AG04449 (cell line): ENCODE measurements at regions of chr11 and their contacts with region 1.

Region 1: DNA sequence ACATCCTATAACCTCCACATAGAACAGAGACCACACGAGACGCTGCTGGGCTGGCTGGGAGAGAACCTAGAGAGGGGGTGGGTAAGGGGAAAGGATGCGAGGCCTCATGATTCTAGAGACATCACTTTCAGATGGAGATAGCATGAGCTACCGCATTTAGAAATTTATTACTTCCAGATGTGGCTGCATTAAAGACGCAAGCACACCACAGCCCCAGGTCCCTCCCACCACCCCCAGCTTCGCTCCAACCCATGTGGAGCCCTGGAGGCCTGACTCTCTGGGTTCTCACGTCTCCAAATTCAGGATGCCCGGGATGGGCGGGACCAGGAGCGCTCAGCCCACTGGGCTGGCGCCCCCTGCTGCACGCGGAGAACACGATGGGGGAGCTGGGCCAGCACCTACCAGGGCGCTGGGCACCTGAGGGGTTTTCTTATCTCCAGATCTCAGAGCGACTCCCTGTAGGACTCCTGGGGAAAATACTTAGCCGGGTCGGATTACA is 13.6 kb downstream of the MRPL21 start:
- DNase-seq: peak; percentile 94
- H3K4me3 ChIP-seq: no peak overlapping the region
- CTCF ChIP-seq: peak; percentile 88

Region 2: DNA sequence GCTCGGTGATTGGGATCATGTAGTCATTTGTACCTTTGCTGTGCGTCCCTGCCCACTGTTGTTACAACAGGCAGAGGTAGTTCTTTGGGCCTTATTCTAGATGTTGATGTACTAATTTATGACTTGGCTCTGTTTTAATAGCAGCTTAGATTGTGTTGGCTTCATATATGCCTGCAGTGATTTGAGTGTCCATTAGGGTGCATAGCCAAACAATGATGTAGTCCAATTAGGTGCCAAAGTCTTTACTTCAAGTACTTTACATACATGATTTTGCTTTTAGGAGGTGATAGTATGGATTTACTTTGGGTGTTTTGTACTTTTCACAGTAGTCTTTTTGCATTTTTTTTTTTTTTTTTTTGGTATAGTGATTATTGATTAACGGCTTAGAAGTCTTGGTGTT is 383.1 kb before region 1 on chr11:
- CTCF ChIA-PET with region 1: no interaction called
- POLR2A ChIA-PET with region 1: no interaction called
- DNase-seq: no peak
- H3K4me3 ChIP-seq: no peak overlapping the region
- CTCF ChIP-seq: no peak

Region 3: DNA sequence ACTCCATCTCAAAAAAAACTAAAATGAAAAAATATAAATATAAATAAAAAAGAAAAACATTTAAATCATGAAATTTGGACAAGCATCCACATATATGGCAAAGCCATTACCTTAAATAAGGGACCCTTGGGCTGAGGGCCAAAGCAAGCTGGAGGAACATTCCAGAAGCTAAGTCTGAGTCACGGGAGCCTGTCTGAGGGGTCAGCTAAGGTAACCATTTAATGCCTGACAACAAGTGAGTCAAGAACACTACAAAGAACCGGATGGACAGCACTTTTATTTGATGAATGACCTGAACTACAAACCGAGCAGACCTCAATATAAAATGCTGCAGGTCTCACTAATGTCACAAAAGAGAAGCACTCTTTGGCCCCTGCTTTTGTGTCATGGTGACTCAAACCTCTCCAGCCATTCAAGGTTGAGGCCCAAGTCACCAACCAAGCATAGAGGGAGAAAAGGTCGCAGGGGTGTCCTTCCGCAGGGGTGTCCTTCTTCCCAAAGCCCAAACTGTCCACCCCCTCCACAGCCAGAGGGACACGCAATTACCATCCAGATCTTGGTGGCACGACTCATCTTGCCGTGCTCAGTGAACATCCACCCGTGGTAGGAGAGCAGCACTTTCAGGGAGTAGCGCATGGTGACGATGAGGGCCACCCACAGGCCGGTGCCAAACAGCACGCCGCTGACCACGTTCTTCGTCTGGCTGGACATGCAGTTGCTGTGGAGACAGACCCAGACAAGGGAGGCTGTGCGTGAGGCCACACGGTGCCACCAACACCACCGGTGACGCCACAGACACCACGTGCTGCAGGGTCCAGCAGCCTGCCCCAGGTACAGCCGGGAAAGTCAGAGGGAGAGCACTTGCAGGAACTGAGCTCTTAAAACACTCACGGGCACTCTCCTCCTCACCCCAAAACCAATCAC is 82.8 kb before region 1 on chr11:
- CTCF ChIA-PET with region 1: interaction called, 19 read pairs
- POLR2A ChIA-PET with region 1: no interaction called
- DNase-seq: peak; percentile 45
- H3K4me3 ChIP-seq: no peak overlapping the region
- CTCF ChIP-seq: no peak

Region 4: DNA sequence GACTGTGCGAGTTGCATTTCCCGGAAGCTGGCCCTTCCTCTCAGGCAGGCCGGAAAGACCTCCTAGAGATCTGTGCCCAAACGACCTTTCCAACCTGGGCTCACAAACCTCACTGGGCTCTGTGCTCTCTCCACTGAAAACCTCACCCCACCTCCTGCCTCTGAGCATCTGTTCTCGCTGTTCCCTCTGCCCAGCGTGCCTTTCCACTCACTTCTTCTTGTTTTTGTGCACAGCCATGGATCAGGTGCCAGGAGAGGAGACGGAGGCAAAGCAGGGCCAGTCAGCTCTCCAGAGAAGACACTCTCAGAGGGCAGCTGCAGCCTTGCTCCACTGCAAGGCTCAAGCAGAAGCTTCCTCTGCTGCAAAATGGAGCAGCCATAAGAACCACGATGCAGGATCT is 37.4 kb before region 1 on chr11:
- CTCF ChIA-PET with region 1: interaction called, 12 read pairs
- POLR2A ChIA-PET with region 1: no interaction called
- DNase-seq: no peak
- H3K4me3 ChIP-seq: no peak overlapping the region
- CTCF ChIP-seq: no peak

Region 5: DNA sequence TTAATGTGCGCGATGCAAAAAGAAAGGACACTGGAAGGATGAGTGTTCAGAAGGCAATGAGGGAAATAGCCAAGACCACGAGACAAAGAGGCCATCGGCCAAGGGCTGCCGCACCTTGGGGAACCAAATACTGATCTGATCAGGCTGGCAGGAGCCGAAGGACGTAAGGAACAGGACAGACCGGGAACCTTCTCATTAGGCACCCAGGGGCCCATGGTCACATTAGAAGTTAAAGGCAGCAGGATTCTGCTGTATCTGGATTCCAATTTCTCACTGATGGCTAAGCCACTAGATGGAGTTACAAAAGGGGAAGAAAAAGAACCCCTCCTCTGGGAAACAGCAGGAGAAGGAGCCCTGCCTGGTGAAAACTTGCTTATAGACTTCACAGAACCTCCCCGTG is 19.5 kb before region 1 on chr11:
- CTCF ChIA-PET with region 1: interaction called, 29 read pairs
- POLR2A ChIA-PET with region 1: interaction called, 4 read pairs
- DNase-seq: no peak
- H3K4me3 ChIP-seq: peak overlapping the region; percentile 23; the same call in 1 of the 2 replicates
- CTCF ChIP-seq: no peak

Region 6: DNA sequence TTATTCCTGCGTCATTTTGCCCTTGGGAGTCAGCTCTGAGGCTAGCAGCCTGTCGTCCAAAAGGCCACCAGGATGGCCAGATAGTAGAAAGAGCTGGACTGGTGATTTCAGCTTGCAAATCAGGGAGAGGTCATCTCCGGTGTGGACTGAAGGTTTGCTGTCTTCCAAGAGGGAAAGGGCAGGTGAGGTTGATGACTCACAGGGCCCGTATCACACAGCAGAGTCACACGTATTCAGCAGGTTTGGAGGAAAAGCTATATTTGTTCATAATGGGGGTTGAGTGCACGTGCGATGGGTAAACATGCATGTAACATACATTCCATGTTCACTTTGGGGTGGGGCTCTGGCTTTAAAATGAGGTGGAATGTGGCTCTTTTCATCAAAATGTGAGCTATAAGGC is 12.0 kb before region 1 on chr11:
- CTCF ChIA-PET with region 1: interaction called, 29 read pairs
- POLR2A ChIA-PET with region 1: interaction called, 7 read pairs
- DNase-seq: no peak
- H3K4me3 ChIP-seq: no peak overlapping the region
- CTCF ChIP-seq: no peak

Region 7: DNA sequence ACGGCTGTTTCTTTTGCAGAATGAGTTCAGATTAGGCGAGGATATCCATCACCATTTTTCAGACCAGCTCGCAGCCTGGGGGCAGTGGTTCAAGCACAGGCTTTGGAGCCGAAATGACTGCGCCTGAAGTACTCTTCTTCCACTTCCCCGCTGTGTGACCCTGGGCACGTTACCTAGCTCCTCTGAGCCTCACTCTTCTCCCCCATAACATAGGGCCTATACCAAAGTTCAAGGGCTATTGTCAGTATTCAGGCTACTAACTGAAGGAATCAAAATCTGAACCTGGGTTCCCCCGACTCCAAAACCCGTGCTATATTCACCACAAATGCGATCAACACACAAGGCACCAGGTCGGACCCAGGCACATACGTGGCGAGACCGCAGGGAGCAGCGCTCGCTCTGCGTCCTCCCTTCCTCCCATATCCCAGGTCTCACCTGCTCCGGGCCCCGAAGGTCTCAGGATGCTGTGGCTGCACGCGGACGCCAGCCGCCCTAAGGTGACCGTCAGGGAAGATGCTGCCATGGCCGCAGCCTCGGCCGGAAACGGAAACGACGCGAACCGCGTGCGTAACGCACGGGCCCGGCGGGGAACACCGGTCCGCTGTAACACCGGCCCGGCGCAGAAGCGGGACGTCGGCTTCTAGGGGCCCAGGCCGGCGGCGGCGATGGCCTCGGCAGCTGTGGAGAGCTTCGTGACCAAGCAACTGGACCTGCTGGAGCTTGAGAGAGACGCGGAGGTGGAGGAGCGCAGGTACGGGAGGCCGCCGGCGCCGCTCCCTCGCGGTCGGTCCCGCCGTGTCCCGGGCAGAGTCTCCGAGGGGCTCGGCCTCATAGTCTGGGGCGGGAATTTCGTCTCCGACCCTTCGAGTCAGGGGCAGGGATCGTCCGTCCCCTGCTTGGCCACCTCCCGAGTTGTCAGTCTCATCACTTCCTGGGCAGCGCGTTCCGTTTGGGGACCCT is 13.6 kb after region 1 on chr11 and contains the starts of genes IGHMBP2 and MRPL21:
- CTCF ChIA-PET with region 1: interaction called, 11 read pairs
- POLR2A ChIA-PET with region 1: interaction called, 8 read pairs
- DNase-seq: no peak
- H3K4me3 ChIP-seq: peak within 1 kb of the TSS; percentile 100
- CTCF ChIP-seq: no peak